Mammary epithelial cell (primary cell): ENCODE measurements at regions of chr17 and their contacts with region 1.

Region 1: GRCh38 chr17:76726231-76726775 is at the start of gene JMJD6:
- DNase-seq: peak; percentile 97
- H3K4me3 ChIP-seq: peak within 1 kb of the TSS; percentile 86 to 97 (median 96)
- H3K27ac ChIP-seq: peak within 1 kb of the TSS; percentile 84
- H3K4me1 ChIP-seq: peaks cover 8% of the 10 kb centered on the region
- H3K27me3 ChIP-seq: no peaks in the 10 kb centered on the region
- CTCF ChIP-seq: no peak
- total RNA-seq, gene JMJD6: 10.3 to 22.2 TPM

Region 2: GRCh38 chr17:76557368-76558197 is 168.7 kb before region 1 on chr17:
- CTCF ChIA-PET with region 1: no interaction called
- dilution Hi-C with region 1: no loop called
- in situ Hi-C with region 1: no loop called
- intact Hi-C with region 1: loop called (anchors 5 kb)
- DNase-seq: peak; percentile 93
- H3K4me3 ChIP-seq: peak overlapping the region; percentile 61 to 89 (median 86)
- H3K27ac ChIP-seq: peak overlapping the region; percentile 95
- H3K4me1 ChIP-seq: peaks cover 54% of the 10 kb centered on the region
- H3K27me3 ChIP-seq: no peaks in the 10 kb centered on the region
- CTCF ChIP-seq: peak; percentile 36 to 54

Region 3: GRCh38 chr17:76709077-76709950 is 17.0 kb before region 1 on chr17:
- CTCF ChIA-PET with region 1: no interaction called
- dilution Hi-C with region 1: no loop called
- in situ Hi-C with region 1: no loop called
- intact Hi-C with region 1: loop called (anchors 2 kb)
- DNase-seq: peak; percentile 80
- H3K4me3 ChIP-seq: peak overlapping the region; percentile 65 to 68 (median 67)
- H3K27ac ChIP-seq: peak overlapping the region; percentile 40
- H3K4me1 ChIP-seq: peaks cover 27% of the 10 kb centered on the region
- H3K27me3 ChIP-seq: no peaks in the 10 kb centered on the region
- CTCF ChIP-seq: no peak

Region 4: GRCh38 chr17:76714822-76715495 is 11.3 kb before region 1 on chr17:
- CTCF ChIA-PET with region 1: no interaction called
- dilution Hi-C with region 1: no loop called
- in situ Hi-C with region 1: no loop called
- intact Hi-C with region 1: loop called (anchors 1 kb)
- DNase-seq: no peak
- H3K4me3 ChIP-seq: no peak overlapping the region
- H3K27ac ChIP-seq: no peak overlapping the region
- H3K4me1 ChIP-seq: peaks cover 10% of the 10 kb centered on the region
- H3K27me3 ChIP-seq: no peaks in the 10 kb centered on the region
- CTCF ChIP-seq: peak; percentile 79 to 84

Region 5: GRCh38 chr17:76737082-76737675 is 10.9 kb after region 1 on chr17 and contains the start of gene SRSF2:
- CTCF ChIA-PET with region 1: no interaction called
- dilution Hi-C with region 1: no loop called
- in situ Hi-C with region 1: no loop called
- intact Hi-C with region 1: loop called (anchors 1 kb)
- DNase-seq: peak; percentile 99
- H3K4me3 ChIP-seq: peak within 1 kb of the TSS; percentile 98 to 100 (median 99)
- H3K27ac ChIP-seq: peak within 1 kb of the TSS; percentile 94
- H3K4me1 ChIP-seq: peaks cover 25% of the 10 kb centered on the region
- H3K27me3 ChIP-seq: no peaks in the 10 kb centered on the region
- CTCF ChIP-seq: no peak
- total RNA-seq, gene SRSF2: 110 to 196 TPM

Region 6: GRCh38 chr17:77068915-77069314 is 342.6 kb after region 1 on chr17:
- CTCF ChIA-PET with region 1: no interaction called
- dilution Hi-C with region 1: no loop called
- in situ Hi-C with region 1: no loop called
- intact Hi-C with region 1: loop called (anchors 2 kb)
- DNase-seq: peak; percentile 54
- H3K4me3 ChIP-seq: no peak overlapping the region
- H3K27ac ChIP-seq: no peak overlapping the region
- H3K4me1 ChIP-seq: peaks cover 9% of the 10 kb centered on the region
- H3K27me3 ChIP-seq: peaks cover 5% of the 10 kb centered on the region
- CTCF ChIP-seq: no peak